ENCODE measurements at regions of chr3 and their contacts with region 1.

Region 1: DNA sequence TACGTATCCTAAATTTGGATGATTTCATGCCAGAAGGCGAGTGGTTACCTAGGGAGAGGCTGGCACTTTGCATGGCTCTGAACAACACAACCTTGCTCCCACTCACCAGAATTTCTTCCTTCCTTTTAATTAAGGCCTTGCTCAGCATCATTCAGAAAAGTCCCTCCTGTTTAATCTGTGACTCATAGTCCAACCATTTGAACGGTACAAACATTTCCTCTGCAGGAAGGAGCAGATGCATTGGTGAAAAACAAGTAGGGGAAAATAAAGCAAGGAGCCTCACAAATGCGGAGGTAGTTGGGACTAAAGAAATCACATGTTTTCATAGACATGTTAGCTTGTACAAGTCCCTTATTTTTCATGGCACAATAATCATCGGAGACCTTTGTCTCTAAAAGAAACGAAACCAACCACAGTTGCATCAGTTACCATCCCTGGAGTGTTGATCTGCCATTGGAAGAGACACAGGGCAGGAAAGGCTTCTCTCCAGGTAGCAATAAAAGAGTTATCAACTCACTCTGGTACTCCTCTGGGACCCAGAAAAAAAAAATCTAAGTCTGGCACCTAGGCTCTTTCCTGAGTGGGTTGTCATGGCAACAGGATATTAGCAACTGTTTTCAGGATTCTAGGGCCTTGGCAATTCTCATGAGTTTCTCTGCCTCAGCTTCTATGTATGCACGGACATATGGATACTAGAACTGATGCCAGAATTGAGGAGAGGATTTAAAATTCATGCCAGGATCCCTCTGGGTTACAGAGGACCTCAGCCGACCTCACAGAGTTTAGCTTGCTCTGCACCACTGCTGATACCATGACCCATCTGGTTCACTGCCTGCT is 255.4 kb upstream of the ARPP21 start:
- DNase-seq: peak; percentile 95
- H3K4me3 ChIP-seq: peak overlapping the region in 1 of 3 experiments; percentile 39
- H3K27ac ChIP-seq: peak overlapping the region; percentile 92
- H3K4me1 ChIP-seq: peaks cover 22% of the 10 kb centered on the region
- H3K27me3 ChIP-seq: no peaks in the 10 kb centered on the region
- CTCF ChIP-seq: no peak
- POLR2A ChIP-seq: no peak

Region 2: GRCh38 chr3:35262406-35262805 is 121.5 kb before region 1 on chr3:
- CTCF ChIA-PET with region 1: no interaction called
- POLR2A ChIA-PET with region 1: no interaction called
- dilution Hi-C with region 1: no loop called
- intact Hi-C with region 1: no loop called
- DNase-seq: no peak
- H3K4me3 ChIP-seq: no peak overlapping the region
- H3K27ac ChIP-seq: no peak overlapping the region
- H3K4me1 ChIP-seq: no peaks in the 10 kb centered on the region
- H3K27me3 ChIP-seq: no peaks in the 10 kb centered on the region
- CTCF ChIP-seq: no peak
- POLR2A ChIP-seq: no peak

Region 3: DNA sequence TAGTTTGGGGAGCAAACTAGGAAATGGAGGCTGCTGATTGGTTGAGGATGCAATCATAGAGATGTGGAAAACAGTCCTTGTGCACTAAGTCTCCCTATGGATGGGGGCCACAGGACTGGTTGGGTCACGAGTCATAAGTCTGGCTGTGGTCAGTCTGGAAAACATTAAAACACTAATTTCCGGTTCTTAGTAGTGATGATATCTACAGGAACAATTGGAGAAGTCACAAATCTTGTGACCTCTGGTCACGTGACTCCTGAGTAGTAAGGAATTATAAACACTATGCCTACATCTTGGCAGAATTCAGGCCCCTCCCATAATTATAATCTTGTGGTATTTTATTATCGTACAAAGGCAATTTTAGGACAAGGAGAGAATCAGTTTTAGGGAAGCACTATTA is 61.9 kb before region 1 on chr3:
- CTCF ChIA-PET with region 1: no interaction called
- POLR2A ChIA-PET with region 1: no interaction called
- dilution Hi-C with region 1: no loop called
- intact Hi-C with region 1: loop called (anchors 1 kb)
- DNase-seq: peak; percentile 37
- H3K4me3 ChIP-seq: no peak overlapping the region
- H3K27ac ChIP-seq: no peak overlapping the region
- H3K4me1 ChIP-seq: peaks cover 4% of the 10 kb centered on the region
- H3K27me3 ChIP-seq: peaks cover 3 to 9% of the 10 kb centered on the region in 2 experiments
- CTCF ChIP-seq: no peak
- POLR2A ChIP-seq: no peak

Region 4: DNA sequence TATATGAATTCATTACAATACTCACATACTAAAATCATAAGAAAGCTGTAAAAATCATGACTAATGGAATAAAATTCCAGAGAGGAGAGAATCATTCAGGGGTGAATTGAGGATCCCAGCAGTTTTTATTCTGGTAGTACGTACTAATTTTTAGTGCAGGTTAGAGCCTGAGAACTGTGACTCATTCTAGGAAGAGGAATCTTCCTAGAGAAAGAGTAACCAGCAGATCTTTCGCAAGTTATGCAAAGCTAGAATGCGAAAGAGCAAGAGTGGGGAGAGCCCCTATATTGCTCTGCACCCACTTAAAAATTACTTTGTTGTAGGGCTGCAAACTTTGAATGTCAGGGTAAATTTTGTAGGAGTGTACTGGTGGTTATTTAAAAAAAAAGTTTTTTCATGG is 48.2 kb before region 1 on chr3:
- CTCF ChIA-PET with region 1: no interaction called
- POLR2A ChIA-PET with region 1: no interaction called
- dilution Hi-C with region 1: no loop called
- intact Hi-C with region 1: loop called (anchors 1 kb)
- DNase-seq: no peak
- H3K4me3 ChIP-seq: no peak overlapping the region
- H3K27ac ChIP-seq: no peak overlapping the region
- H3K4me1 ChIP-seq: peaks cover 13% of the 10 kb centered on the region
- H3K27me3 ChIP-seq: no peaks in the 10 kb centered on the region
- CTCF ChIP-seq: no peak
- POLR2A ChIP-seq: no peak

Region 5: GRCh38 chr3:35422836-35423601 is 39.1 kb after region 1 on chr3:
- CTCF ChIA-PET with region 1: no interaction called
- POLR2A ChIA-PET with region 1: no interaction called
- dilution Hi-C with region 1: no loop called
- intact Hi-C with region 1: loop called (anchors 1 kb)
- DNase-seq: peak; percentile 81
- H3K4me3 ChIP-seq: peak overlapping the region in 1 of 3 experiments; percentile 18
- H3K27ac ChIP-seq: peak overlapping the region; percentile 32
- H3K4me1 ChIP-seq: peaks cover 16% of the 10 kb centered on the region
- H3K27me3 ChIP-seq: peaks cover 18 to 20% of the 10 kb centered on the region in 2 experiments
- CTCF ChIP-seq: no peak
- POLR2A ChIP-seq: no peak

Region 6: GRCh38 chr3:35523838-35524237 is 139.9 kb after region 1 on chr3:
- CTCF ChIA-PET with region 1: no interaction called
- POLR2A ChIA-PET with region 1: no interaction called
- dilution Hi-C with region 1: no loop called
- intact Hi-C with region 1: loop called (anchors 1 kb)
- DNase-seq: peak; percentile 66
- H3K4me3 ChIP-seq: no peak overlapping the region
- H3K27ac ChIP-seq: peak overlapping the region; percentile 68
- H3K4me1 ChIP-seq: peaks cover 10% of the 10 kb centered on the region
- H3K27me3 ChIP-seq: no peaks in the 10 kb centered on the region
- CTCF ChIP-seq: no peak
- POLR2A ChIP-seq: no peak

Region 7: DNA sequence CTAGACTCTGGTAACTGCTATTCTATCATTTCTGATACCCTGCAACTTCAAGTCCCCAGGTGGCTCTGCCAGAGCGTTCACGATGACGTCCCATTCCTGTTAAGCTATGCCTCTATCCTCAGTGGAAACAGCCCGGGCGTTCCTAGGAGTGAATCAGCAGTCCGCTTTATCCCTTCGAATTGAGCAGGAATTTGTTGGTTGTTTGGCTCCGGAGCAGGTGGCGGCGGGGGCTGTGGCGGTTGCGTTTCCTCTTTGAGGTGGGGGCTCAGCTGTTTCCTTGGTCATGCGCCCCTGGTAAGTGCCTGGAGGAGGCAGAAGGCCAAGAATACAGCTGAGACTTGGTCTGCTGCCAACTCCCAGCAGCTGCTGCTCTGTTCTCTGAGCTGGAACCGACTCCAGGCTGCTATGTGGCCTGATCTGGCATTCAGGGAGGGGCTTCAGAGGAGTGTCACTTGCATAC is 280.6 kb after region 1 on chr3:
- CTCF ChIA-PET with region 1: interaction called, 3 read pairs
- POLR2A ChIA-PET with region 1: no interaction called
- dilution Hi-C with region 1: no loop called
- intact Hi-C with region 1: loop called (anchors 2 kb)
- DNase-seq: peak; percentile 86
- H3K4me3 ChIP-seq: no peak overlapping the region
- H3K27ac ChIP-seq: no peak overlapping the region
- H3K4me1 ChIP-seq: peaks cover 25% of the 10 kb centered on the region
- H3K27me3 ChIP-seq: no peaks in the 10 kb centered on the region
- CTCF ChIP-seq: no peak
- POLR2A ChIP-seq: no peak

Measured in endothelial cell of umbilical vein (primary cell).